ENCODE measurements at regions of chr3 and their contacts with region 1.

Region 1: DNA sequence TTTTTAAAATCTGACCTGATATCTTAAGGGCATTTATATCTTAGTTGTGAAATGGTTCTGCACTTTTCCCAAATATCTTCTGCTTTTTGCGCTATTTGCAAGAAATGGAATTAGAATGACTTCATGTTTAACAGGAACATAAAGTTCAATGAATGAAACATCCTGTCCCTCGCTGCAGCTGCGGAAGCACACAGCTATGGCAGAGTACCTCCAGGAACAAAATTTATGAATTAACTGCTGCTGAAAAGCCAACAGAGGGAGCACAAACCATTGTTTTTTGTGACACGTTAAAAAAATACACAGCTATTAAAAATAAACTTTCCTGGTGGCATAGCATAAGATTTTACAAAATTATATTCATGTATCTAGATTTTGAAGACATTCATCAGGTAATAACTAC is 404.4 kb upstream of the MDFIC2 start:
- DNase-seq: no peak
- H3K4me3 Mint-ChIP-seq: no peak overlapping the region
- H3K27ac Mint-ChIP-seq: no peak overlapping the region
- H3K4me1 Mint-ChIP-seq: no peaks in the 10 kb centered on the region
- H3K27me3 Mint-ChIP-seq: no peaks in the 10 kb centered on the region
- CTCF ChIP-seq: no peak

Region 2: GRCh38 chr3:70201975-70202374 is 514.9 kb before region 1 on chr3:
- CTCF ChIA-PET with region 1: no interaction called
- intact Hi-C with region 1: no loop called
- DNase-seq: no peak
- H3K4me3 Mint-ChIP-seq: no peak overlapping the region
- H3K27ac Mint-ChIP-seq: no peak overlapping the region
- H3K4me1 Mint-ChIP-seq: peaks cover 14% of the 10 kb centered on the region
- H3K27me3 Mint-ChIP-seq: no peaks in the 10 kb centered on the region
- CTCF ChIP-seq: no peak

Region 3: GRCh38 chr3:70464876-70465275 is 252.0 kb before region 1 on chr3:
- CTCF ChIA-PET with region 1: no interaction called
- intact Hi-C with region 1: no loop called
- DNase-seq: no peak
- H3K4me3 Mint-ChIP-seq: no peak overlapping the region
- H3K27ac Mint-ChIP-seq: no peak overlapping the region
- H3K4me1 Mint-ChIP-seq: no peaks in the 10 kb centered on the region
- H3K27me3 Mint-ChIP-seq: peaks cover 32% of the 10 kb centered on the region
- CTCF ChIP-seq: no peak

Region 4: GRCh38 chr3:70684701-70685100 is 32.1 kb before region 1 on chr3:
- CTCF ChIA-PET with region 1: no interaction called
- intact Hi-C with region 1: no loop called
- DNase-seq: no peak
- H3K4me3 Mint-ChIP-seq: no peak overlapping the region
- H3K27ac Mint-ChIP-seq: no peak overlapping the region
- H3K4me1 Mint-ChIP-seq: no peaks in the 10 kb centered on the region
- H3K27me3 Mint-ChIP-seq: peaks cover 19% of the 10 kb centered on the region
- CTCF ChIP-seq: no peak

Region 5: GRCh38 chr3:70853161-70853944 is 136.5 kb after region 1 on chr3:
- CTCF ChIA-PET with region 1: interaction called, 11 read pairs
- intact Hi-C with region 1: no loop called
- DNase-seq: no peak
- H3K4me3 Mint-ChIP-seq: no peak overlapping the region
- H3K27ac Mint-ChIP-seq: no peak overlapping the region
- H3K4me1 Mint-ChIP-seq: peaks cover 21% of the 10 kb centered on the region
- H3K27me3 Mint-ChIP-seq: no peaks in the 10 kb centered on the region
- CTCF ChIP-seq: no peak

Measured in Calu3 (cell line).